PC-3 (cell line): ENCODE measurements at regions of chr11 and their contacts with region 1.

Region 1: DNA sequence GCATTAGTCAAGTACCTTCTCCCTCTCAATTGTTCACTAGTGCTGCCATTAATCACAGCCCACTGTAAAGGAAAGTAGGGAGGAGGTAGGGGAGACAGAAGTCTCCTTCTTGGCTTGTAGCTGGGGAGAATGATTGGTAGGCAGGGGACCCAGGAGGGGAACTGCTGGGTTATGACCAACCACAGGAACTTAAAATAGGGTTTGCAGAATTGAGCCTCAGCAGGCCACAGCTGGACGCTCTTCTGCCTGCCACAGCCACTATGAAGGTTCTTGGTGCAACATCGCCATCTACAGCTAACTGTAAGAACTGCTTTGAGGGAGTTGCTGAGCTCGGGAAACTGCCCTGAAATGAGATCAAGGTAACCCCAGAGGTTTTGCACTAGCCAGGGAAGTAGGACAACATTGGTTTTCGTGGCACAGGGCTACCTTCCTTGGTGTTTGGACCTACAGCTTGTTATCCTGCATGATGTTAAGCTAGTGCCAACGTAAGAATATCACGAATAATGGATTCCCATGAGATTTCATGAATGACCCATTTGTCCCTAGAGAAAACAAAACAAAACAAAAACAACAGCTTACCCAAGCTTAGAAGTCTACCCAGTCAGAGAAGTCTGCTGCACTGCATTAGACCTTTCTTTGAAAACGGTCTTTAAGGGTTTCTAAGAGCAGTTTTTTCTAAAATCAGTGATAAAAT is 787.1 kb upstream of the API5 start:
- DNase-seq: peak; percentile 77
- ATAC-seq: peak; percentile 57; the same call in 1 of the 2 replicates
- H3K4me3 ChIP-seq: no peak overlapping the region
- H3K27ac ChIP-seq: no peak overlapping the region
- H3K4me1 ChIP-seq: peaks cover 11% of the 10 kb centered on the region
- H3K27me3 ChIP-seq: no peaks in the 10 kb centered on the region
- CTCF ChIP-seq: peak; percentile 82

Region 2: DNA sequence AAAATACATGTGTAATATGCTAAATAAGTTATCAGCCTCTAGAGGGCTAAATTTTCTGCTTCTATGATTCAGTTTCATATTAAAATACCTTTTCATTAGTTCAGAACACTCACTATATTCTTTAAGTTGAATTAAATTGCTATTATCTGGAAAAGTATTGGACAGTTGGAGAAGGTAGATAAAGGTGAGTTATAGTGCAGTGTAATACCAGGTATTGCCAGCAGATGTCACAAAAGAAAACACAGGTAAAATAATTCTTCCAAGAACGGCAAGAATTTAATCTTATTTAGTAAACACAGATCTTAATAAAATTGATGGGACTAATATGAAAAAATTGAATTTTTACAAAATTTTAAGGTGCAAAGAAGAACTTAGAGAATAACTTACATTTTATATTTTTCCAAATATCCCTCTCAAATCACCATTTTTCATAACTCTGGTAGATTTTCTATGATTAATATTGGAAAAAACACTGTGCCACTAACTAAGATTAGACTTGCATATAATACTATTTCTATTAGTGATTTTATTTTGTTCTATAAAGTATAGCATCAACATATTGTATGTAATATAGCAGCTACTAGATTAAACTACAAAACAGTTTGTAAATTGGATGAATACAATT is 1063.5 kb before region 1 on chr11:
- CTCF ChIA-PET with region 1: no interaction called
- POLR2A ChIA-PET with region 1: no interaction called
- intact Hi-C with region 1: loop called (anchors 10 kb)
- DNase-seq: peak; percentile 50
- ATAC-seq: no peak
- H3K4me3 ChIP-seq: no peak overlapping the region
- H3K27ac ChIP-seq: no peak overlapping the region
- H3K4me1 ChIP-seq: no peaks in the 10 kb centered on the region
- H3K27me3 ChIP-seq: peaks cover 23% of the 10 kb centered on the region
- CTCF ChIP-seq: peak; percentile 74

Region 3: GRCh38 chr11:42498971-42499370 is 25.7 kb before region 1 on chr11:
- CTCF ChIA-PET with region 1: no interaction called
- POLR2A ChIA-PET with region 1: no interaction called
- intact Hi-C with region 1: no loop called
- DNase-seq: no peak
- ATAC-seq: no peak
- H3K4me3 ChIP-seq: no peak overlapping the region
- H3K27ac ChIP-seq: no peak overlapping the region
- H3K4me1 ChIP-seq: no peaks in the 10 kb centered on the region
- H3K27me3 ChIP-seq: no peaks in the 10 kb centered on the region
- CTCF ChIP-seq: no peak